Activated CD4-positive, alpha-beta T cell treated with anti-CD3 and anti-CD28 coated beads for 36 hours (primary cell): ENCODE measurements at regions of chr7 and their contacts with region 1.

Region 1: GRCh38 chr7:100208911-100209408 is 10.8 kb upstream of the PVRIG start:
- DNase-seq: peak; percentile 78
- ATAC-seq: peak; percentile 91
- H3K4me3 Mint-ChIP-seq: peak overlapping the region; percentile 57
- H3K27ac Mint-ChIP-seq: peak overlapping the region; percentile 76
- H3K4me1 Mint-ChIP-seq: peaks cover 45% of the 10 kb centered on the region
- H3K27me3 Mint-ChIP-seq: no peaks in the 10 kb centered on the region

Region 2: DNA sequence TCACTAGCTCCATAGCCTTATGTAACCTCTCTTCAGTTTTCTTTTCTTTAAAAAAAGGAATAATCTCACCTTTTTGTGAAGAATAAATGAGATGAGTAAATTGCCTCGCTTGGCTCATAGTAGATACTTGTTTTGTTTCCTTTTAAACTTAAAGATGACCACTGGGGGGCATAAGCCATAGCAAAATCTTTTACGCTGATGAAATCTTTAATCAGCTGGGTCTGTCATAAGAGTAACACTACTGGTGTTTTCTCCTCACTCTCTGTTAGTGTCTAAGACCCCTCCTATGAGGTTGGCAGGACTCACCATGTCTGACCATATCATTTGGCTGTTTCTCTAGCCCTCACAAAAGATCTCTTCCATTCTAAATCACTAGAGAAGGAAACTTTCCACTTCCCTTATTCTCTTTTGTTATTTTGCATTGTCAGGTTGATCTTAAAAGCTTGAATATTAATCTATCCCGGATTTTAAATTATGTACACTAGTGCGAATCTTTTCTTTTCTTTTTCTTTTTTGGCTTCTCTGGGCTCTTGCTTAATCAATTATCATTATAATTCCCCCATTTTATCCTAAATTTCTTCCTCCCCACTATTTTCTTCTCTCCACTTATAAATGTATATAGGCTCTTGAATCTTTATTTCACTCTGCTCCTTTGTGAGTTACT is 18.8 kb before region 1 on chr7:
- CTCF ChIA-PET with region 1: interaction called, 16 read pairs
- POLR2A ChIA-PET with region 1: no interaction called
- intact Hi-C with region 1: loop called in 1 of 2 experiments (anchors 2 kb)
- DNase-seq: no peak
- ATAC-seq: peak; percentile 91
- H3K4me3 Mint-ChIP-seq: no peak overlapping the region
- H3K27ac Mint-ChIP-seq: peak overlapping the region; percentile 81
- H3K4me1 Mint-ChIP-seq: peaks cover 38% of the 10 kb centered on the region
- H3K27me3 Mint-ChIP-seq: no peaks in the 10 kb centered on the region

Region 3: DNA sequence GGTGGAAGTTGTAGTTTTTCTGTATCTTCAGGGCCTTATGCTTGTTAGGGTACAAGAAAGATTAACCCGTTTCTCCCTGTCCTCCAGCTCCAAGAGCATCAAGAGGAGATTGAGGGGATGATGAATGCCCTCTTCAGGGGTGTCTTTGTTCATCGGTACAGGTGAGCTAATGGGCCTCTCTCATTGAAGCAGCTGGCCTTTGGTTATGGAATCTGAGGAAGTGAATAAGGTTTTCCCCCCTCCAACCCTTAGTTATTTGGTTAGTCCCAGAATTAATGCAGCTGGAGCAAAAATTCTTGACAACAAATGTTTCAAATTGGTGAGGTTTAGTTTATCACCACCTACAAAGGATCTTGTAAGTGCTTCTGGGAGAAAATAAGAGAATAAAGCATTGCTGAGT is 13.7 kb before region 1 on chr7:
- CTCF ChIA-PET with region 1: interaction called, 16 read pairs
- POLR2A ChIA-PET with region 1: no interaction called
- intact Hi-C with region 1: loop called in 1 of 2 experiments (anchors 2 kb)
- DNase-seq: no peak
- ATAC-seq: no peak
- H3K4me3 Mint-ChIP-seq: no peak overlapping the region
- H3K27ac Mint-ChIP-seq: peak overlapping the region; percentile 4
- H3K4me1 Mint-ChIP-seq: peaks cover 42% of the 10 kb centered on the region
- H3K27me3 Mint-ChIP-seq: no peaks in the 10 kb centered on the region

Region 4: DNA sequence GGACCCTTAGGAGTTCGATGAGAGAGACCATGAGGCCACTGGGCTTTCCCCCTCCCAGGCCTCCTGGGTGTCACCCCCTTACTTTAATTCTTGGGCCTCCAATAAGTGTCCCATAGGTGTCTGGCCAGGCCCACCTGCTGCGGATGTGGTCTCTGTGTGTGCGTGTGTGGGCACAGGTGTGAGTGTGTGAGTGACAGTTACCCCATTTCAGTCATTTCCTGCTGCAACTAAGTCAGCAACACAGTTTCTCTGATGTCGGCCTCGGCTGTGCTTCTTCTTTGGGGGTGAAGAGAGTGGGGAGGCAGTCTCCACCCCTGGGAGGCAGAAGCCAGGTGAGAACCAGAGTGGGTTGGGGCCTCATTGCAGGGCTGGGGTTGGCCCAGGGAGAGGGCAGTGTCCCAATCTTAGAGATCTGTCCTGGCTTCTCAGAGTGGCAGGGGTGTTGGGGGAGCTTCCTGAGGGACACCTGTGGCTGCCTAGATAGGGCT is 12.3 kb after region 1 on chr7:
- CTCF ChIA-PET with region 1: interaction called, 11 read pairs
- POLR2A ChIA-PET with region 1: no interaction called
- intact Hi-C with region 1: loop called in 1 of 2 experiments (anchors 1 kb)
- DNase-seq: peak; percentile 81
- ATAC-seq: peak; percentile 57
- H3K4me3 Mint-ChIP-seq: peak overlapping the region; percentile 96
- H3K27ac Mint-ChIP-seq: peak overlapping the region; percentile 90
- H3K4me1 Mint-ChIP-seq: peaks cover 47% of the 10 kb centered on the region
- H3K27me3 Mint-ChIP-seq: no peaks in the 10 kb centered on the region

Region 5: DNA sequence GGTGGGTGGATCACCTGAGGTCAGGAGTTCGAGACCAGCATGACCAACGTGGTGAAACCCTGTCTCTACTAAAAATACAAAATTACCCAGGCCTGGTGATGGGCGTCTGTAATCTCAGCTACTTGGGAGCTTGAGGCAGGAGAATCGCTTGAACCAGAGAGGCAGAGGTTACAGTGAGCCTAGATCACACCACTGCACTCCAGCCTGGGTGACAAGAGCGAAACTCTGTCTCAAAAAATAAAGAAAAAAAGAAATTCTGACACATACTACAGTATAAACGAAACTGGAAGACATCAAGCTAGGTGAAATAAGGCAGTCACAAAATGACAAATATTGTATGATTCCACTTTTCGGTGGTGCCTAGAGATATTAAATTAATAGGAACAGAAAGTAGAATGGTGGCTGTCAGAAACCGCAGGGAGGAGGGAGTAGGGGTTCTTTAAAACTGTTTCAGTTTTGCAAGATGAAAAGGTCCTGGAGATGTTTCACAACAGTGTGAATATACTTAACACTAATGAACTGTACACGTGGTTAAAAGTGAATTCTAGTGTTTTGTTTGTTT is 187.5 kb after region 1 on chr7:
- CTCF ChIA-PET with region 1: interaction called, 4 read pairs
- POLR2A ChIA-PET with region 1: no interaction called
- intact Hi-C with region 1: loop called in 1 of 2 experiments (anchors 1 kb)
- DNase-seq: peak; percentile 82
- ATAC-seq: peak; percentile 92
- H3K4me3 Mint-ChIP-seq: peak overlapping the region; percentile 1
- H3K27ac Mint-ChIP-seq: peak overlapping the region; percentile 40
- H3K4me1 Mint-ChIP-seq: peaks cover 26% of the 10 kb centered on the region
- H3K27me3 Mint-ChIP-seq: peaks cover 20% of the 10 kb centered on the region